ENCODE measurements at regions of chr7 and their contacts with region 1.

Region 1: GRCh38 chr7:64914557-64914956 is 11.5 kb downstream of the ZNF273 start:
- DNase-seq: peak; percentile 39 to 89 (median 66)
- ATAC-seq: peak; percentile 86
- H3K4me3 ChIP-seq: no peak overlapping the region
- H3K27ac ChIP-seq: peak overlapping the region; percentile 78
- H3K4me1 ChIP-seq: peaks cover 8 to 11% of the 10 kb centered on the region in 2 experiments; a peak in 3 of 5 replicates
- H3K27me3 ChIP-seq: no peaks in the 10 kb centered on the region
- CTCF ChIP-seq: no peak
- EP300 ChIP-seq: peak; percentile 94
- POLR2A ChIP-seq: no peak
- RAD21 ChIP-seq: no peak

Region 2: DNA sequence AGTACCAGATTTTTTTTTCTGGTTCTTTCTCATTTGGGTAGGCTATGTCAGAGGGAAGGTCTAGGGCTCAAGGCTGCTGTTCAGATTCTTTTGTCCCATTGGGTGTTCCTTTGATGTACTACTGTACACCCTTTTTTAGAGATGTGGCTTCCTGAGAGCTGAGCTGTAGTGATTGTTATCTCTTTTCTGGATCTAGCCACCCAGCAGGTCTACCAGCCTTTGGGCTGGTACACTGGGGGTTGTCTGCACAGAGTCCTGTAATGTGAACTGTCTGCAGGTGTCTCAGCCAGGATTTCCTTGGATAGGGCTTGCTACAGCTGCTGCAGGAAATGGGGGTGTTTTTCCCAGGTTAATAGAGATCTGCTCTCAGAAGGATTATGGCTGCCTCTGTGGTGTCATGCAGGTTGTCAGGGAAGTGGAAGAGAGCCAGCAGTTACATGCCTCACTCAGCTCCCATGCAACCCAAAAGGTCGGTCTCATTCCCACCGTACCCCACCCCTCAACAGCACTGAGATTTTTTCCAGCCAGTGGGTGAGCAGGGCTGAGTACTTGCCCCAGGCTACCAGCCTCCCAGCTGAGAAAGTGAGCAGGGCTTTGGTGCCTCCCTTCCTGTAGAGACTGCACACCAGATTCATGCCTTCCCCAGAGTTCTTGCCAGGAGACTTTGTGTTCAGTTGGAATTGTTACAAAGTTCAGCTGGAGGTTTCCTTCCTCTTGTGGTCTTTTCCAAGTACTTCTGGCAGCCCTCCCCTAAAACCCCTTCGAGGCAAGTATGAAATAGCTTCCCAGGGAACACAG is 185.3 kb before region 1 on chr7:
- CTCF ChIA-PET with region 1: no interaction called
- POLR2A ChIA-PET with region 1: no interaction called
- in situ Hi-C with region 1: no loop called
- intact Hi-C with region 1: loop called (anchors 10 kb)
- DNase-seq: no peak
- ATAC-seq: no peak
- H3K4me3 ChIP-seq: no peak overlapping the region
- H3K27ac ChIP-seq: no peak overlapping the region
- H3K4me1 ChIP-seq: no peaks in the 10 kb centered on the region; a peak in 1 of 5 replicates
- H3K27me3 ChIP-seq: no peaks in the 10 kb centered on the region
- CTCF ChIP-seq: no peak
- EP300 ChIP-seq: no peak
- POLR2A ChIP-seq: no peak
- RAD21 ChIP-seq: no peak

Region 3: DNA sequence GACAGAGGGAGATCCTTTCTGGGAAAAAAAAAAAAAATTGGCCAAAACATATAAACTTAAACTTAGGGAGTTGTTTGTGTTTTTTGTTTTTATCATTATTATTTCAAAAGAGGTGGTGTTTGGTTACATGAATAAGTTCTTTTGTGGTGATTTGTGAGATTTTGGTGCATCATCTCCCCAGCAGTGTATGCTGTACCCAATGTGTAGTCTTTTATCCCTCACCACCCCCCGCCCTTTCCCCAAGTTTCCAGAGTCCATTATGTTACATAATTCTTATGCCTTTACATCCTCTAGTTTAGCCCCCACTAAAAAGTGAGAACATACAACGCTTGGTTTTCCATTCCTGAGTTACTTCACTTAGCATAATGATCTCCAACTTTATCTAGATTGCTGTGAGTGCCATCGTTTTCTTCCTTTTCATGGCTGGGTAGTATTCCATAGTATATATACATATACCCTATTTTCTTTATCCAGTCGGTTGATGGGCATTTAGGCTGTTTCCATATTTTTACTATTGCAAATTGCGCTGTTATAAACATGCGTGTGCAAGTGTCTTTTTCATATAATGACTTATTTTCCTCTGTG is 311.0 kb after region 1 on chr7:
- CTCF ChIA-PET with region 1: no interaction called
- POLR2A ChIA-PET with region 1: no interaction called
- in situ Hi-C with region 1: no loop called
- intact Hi-C with region 1: no loop called
- DNase-seq: no peak
- ATAC-seq: no peak
- H3K4me3 ChIP-seq: no peak overlapping the region
- H3K27ac ChIP-seq: no peak overlapping the region
- H3K4me1 ChIP-seq: no peaks in the 10 kb centered on the region
- H3K27me3 ChIP-seq: no peaks in the 10 kb centered on the region
- CTCF ChIP-seq: no peak
- EP300 ChIP-seq: no peak
- POLR2A ChIP-seq: no peak
- RAD21 ChIP-seq: no peak

Measured in K562 (cell line).